ENCODE measurements at regions of chr1 and their contacts with region 1.

Region 1: GRCh38 chr1:222814536-222815439 is at the start of gene DISP1:
- DNase-seq: peak; percentile 68
- H3K4me3 Mint-ChIP-seq: peak within 1 kb of the TSS; percentile 90
- H3K27ac Mint-ChIP-seq: peak within 1 kb of the TSS; percentile 93
- H3K4me1 Mint-ChIP-seq: peaks cover 33% of the 10 kb centered on the region
- H3K27me3 Mint-ChIP-seq: peaks cover 12% of the 10 kb centered on the region
- total RNA-seq, gene DISP1: 1.0 and 1.2 TPM in 2 replicates

Region 2: DNA sequence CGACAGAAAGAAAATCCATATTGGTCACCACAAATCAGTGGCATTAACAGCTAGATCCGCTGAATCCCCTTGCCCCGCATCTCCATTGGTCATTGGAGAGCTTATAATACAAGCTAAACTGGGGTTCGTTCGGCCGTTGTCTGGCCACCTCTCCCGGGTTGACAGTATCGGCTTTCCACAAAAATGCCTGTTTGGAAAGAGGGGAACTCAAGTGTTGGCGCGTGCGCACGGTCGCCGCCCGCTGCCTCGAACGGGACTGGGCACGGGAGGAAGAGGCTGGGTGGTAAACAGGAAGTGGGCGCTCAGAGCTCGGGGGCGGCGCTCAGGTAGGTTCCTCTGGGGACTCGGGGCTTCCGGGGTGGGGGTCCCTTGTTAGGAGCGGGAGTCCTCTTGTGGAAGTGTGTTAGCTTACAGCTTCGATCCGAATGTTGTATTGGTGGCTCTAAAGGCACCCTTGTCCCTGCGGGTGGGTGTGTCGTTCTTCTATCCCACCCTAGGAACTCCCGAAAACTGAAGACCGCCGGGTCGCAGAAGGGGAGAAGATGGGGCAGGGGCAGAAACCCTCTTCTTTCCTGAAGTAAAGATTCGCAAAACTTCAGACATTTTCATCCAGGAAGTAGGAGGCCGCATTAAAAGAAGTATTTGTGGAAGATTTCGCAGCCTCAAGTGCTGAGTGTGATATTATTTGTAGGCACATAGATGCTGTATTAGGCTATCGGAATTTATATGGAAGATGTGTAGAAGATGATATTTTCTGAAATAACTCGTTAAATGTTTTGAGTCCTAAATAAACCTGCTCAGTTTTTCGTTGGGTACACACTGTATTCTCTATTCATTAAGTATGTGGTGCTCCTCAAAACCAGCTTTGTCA is 101.5 kb before region 1 on chr1:
- intact Hi-C with region 1: loop called (anchors 1 kb)
- DNase-seq: peak; percentile 85
- H3K4me3 Mint-ChIP-seq: peak overlapping the region; percentile 94
- H3K27ac Mint-ChIP-seq: peak overlapping the region; percentile 99
- H3K4me1 Mint-ChIP-seq: peaks cover 57% of the 10 kb centered on the region
- H3K27me3 Mint-ChIP-seq: no peaks in the 10 kb centered on the region

Region 3: DNA sequence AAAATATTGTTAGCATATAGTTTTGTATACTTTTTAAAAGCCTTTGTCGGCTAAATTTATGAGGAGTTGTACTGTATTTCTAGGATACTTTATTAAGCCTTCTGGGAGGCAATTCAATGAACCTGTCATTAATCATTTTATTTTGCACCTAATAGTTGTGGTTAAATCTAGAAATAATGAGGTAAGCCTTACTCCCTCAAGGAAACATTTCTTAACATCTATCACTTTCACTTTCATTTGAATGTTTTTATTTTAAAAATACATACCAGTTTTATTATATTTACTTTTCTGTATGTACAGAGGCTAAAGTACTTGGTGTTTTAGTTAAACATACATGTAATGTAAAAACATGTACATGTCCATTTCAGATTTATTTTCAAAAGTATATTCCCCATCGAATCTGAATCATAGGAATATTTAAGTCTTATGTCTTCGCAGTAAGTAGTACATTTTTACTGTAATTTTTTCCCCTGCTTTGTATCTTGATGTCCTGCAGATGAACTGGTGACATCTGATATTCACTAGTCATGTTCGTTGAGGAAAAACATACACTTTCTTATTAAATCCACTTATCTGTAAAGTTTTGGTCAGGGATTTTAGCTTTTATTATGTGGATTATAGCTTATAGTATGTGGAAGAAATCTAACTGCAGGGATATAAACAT is 82.9 kb after region 1 on chr1:
- intact Hi-C with region 1: loop called (anchors 2 kb)
- DNase-seq: no peak
- H3K4me3 Mint-ChIP-seq: no peak overlapping the region
- H3K27ac Mint-ChIP-seq: peak overlapping the region; percentile 51
- H3K4me1 Mint-ChIP-seq: peaks cover 16% of the 10 kb centered on the region
- H3K27me3 Mint-ChIP-seq: peaks cover 4% of the 10 kb centered on the region

Region 4: GRCh38 chr1:223189903-223190724 is 375.3 kb after region 1 on chr1:
- intact Hi-C with region 1: loop called (anchors 1 kb)
- DNase-seq: no peak
- H3K4me3 Mint-ChIP-seq: no peak overlapping the region
- H3K27ac Mint-ChIP-seq: peak overlapping the region; percentile 53
- H3K4me1 Mint-ChIP-seq: peaks cover 12% of the 10 kb centered on the region
- H3K27me3 Mint-ChIP-seq: peaks cover 12% of the 10 kb centered on the region

Measured in activated T-helper 1 cell treated with anti-CD3 and anti-CD28 coated beads, Interleukin-12 subunit alpha, Interleukin-12 subunit beta, Interleukin-2, Interleukin-4 antibody, amounts not matched to agents 30 ng/mL and 10 ng/mL and 1 ng/mL, durations not matched to agents 14 hours and 24 hours and 36 hours (primary cell).